Spleen (tissue), 13 donors: ENCODE measurements at regions of chr12 and their contacts with region 1.

Region 1: DNA sequence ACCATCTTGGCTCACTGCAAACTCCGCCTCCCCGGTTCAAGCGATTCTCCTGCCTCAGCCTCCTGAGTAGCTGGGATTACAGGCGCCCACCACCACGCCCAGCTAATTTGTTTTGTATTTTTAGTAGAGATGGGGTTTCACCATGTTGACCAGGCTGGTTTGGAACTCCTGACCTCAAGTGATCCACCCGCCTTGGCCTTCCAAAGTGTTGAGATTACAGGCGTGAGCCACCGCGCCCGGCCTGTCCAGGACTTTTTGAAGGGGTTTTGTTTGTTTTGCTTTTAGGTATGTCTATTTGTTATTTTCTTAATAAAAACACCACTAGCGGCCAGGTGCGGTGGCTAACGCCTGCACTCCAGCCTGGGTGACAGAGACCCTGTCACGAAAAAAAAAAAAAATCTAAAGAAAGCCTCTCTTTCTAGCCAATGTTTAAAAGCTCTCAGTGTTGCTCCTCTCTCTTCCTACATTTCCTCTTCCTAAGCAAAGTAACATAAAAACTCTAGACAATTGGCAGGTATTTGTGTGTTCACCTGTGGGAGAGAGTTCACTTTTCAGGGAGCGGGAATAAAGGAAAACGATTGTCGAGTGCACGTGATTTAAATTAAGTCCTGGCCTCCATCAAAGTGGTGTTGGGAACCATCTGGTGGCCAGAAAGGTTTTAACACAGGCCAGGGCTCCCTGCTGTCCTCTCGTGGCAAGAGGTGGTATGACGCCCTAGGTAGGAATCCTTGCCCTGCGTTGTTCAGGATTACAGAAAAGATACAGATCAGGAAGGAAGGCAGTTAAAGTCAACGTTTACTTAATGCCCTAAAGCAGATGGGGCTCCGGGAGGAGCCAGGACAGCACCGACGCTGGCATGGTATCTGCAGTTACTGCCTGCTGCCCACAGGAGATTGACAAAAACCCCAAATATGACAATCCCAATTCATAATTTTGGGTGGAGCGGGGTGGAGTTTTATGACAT is 36.2 kb upstream of the ATP23 start:
- DNase-seq: peak; percentile 89
- H3K4me3 ChIP-seq: peak overlapping the region in 3 of 8 donors; percentile 5 to 21 (median 19)
- H3K27ac ChIP-seq: peak overlapping the region in 1 of 8 donors; percentile 13
- H3K4me1 ChIP-seq: peaks cover 2 to 12% (median 10%) of the 10 kb centered on the region in 6 donors
- H3K27me3 ChIP-seq: peaks cover 0 to 3% (median 0%) of the 10 kb centered on the region in 7 donors
- CTCF ChIP-seq: peak; percentile 99 to 100 (median 99)
- POLR2A ChIP-seq: no peak

Region 2: DNA sequence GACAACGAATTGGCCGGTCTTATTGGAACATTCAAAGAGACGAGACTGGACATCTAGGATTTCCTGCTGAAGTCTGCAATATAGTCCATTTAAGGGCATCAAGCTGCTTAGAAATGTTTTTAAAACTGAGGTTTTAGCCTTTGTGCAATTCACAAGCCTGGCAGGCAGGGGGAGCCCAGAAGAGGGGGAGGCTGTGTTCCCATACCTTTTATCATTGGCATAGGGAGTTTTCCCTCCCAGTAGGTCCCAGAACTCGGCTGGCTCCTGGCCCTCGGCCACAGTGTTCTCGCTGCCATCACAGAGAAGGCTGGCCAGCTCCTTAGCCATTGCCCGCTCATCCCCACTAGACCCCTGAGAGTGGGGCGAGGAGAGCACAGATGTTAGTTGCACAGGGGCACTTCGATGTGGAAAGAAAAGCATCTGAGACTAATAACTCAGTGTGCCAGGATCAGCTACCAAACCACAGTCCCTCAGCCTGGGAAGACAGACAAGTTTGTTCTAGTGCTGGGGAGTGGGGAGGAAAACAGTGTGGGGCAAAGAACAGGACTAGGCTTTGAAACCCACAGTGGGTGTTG is 101.7 kb before region 1 on chr12:
- intact Hi-C with region 1: loop called (anchors 10 kb)
- DNase-seq: no peak
- H3K4me3 ChIP-seq: no peak overlapping the region
- H3K27ac ChIP-seq: peak overlapping the region in 1 of 8 donors; percentile 31
- H3K4me1 ChIP-seq: no peaks in the 10 kb centered on the region
- H3K27me3 ChIP-seq: no peaks in the 10 kb centered on the region
- CTCF ChIP-seq: peak; percentile 41 to 78 (median 74)
- POLR2A ChIP-seq: no peak

Region 3: GRCh38 chr12:57832966-57833365 is 72.2 kb before region 1 on chr12:
- intact Hi-C with region 1: loop called (anchors 5 kb)
- DNase-seq: no peak
- H3K4me3 ChIP-seq: peak overlapping the region in 1 of 8 donors; percentile 2
- H3K27ac ChIP-seq: peak overlapping the region in 6 of 8 donors; percentile 23 to 74 (median 66)
- H3K4me1 ChIP-seq: peaks cover 81 to 100% (median 96%) of the 10 kb centered on the region in 6 donors
- H3K27me3 ChIP-seq: no peaks in the 10 kb centered on the region
- CTCF ChIP-seq: no peak
- POLR2A ChIP-seq: no peak